B cell (primary cell): ENCODE measurements at regions of chr6 and their contacts with region 1.

Region 1: GRCh38 chr6:26312501-26313390 is 52.3 kb upstream of the BTN3A2 start:
- DNase-seq: peak; percentile 90
- ATAC-seq: peak; percentile 75
- H3K4me3 ChIP-seq: peak overlapping the region; percentile 64 to 100 (median 77)
- H3K4me3 Mint-ChIP-seq: peak overlapping the region; percentile 93
- H3K27ac ChIP-seq: peak overlapping the region in 1 of 2 donors; percentile 56
- H3K27ac Mint-ChIP-seq: peak overlapping the region; percentile 92
- H3K4me1 ChIP-seq: peaks cover 15 to 23% of the 10 kb centered on the region in 2 donors
- H3K4me1 Mint-ChIP-seq: peaks cover 32% of the 10 kb centered on the region
- H3K27me3 ChIP-seq: no peaks in the 10 kb centered on the region
- H3K27me3 Mint-ChIP-seq: peaks cover 4% of the 10 kb centered on the region
- CTCF ChIP-seq: no peak

Region 2: DNA sequence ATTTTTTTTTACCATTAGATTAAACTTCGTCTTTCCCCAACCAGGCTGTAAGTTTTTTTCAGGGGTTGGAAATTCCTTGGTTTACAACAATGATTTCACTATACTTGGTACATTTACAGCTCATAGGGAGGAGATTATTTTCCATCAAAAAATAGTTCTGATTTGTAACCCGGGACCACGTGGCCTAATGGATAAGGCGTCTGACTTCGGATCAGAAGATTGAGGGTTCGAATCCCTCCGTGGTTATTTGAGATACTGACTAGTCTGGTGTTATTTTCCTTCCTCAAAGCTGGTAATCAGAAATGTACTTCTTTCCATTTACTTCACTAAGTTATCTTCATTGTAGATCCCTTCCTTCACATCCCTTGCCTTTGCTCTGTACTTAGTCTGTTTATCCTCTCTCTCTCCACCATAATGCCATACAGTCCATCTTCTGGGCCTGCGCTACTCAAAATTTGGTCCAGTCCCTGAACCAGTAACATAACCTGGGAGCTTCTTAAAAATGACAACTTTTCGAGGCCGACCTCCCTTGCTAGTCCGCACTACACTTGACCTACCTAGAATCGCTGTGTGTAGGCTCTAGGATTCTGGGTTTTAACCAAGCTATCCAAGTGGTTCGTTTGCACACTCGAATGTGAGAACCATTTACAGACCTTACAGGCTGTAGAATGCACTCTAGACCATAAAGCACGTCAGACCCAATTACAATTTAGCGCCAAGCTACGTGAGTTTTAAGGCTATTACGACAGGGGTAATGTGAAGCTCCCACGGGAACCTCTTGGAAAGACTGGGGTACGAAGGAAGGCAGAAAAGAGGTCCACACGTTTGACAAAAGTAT is 10.1 kb after region 1 on chr6:
- CTCF ChIA-PET with region 1: interaction called, 7 read pairs
- POLR2A ChIA-PET with region 1: interaction called, 4 read pairs
- intact Hi-C with region 1: loop called (anchors 1 kb)
- DNase-seq: peak; percentile 83
- ATAC-seq: peak; percentile 59
- H3K4me3 ChIP-seq: peak overlapping the region in 4 of 5 experiments; percentile 49 to 74 (median 59)
- H3K4me3 Mint-ChIP-seq: peak overlapping the region; percentile 74
- H3K27ac ChIP-seq: no peak overlapping the region
- H3K27ac Mint-ChIP-seq: peak overlapping the region; percentile 70
- H3K4me1 ChIP-seq: peaks cover 14 to 31% of the 10 kb centered on the region in 2 donors
- H3K4me1 Mint-ChIP-seq: peaks cover 22% of the 10 kb centered on the region
- H3K27me3 ChIP-seq: peaks cover 0 to 43% (median 25%) of the 10 kb centered on the region in 4 experiments
- H3K27me3 Mint-ChIP-seq: peaks cover 26% of the 10 kb centered on the region
- CTCF ChIP-seq: no peak

Region 3: GRCh38 chr6:26329763-26330511 is 17.2 kb after region 1 on chr6:
- CTCF ChIA-PET with region 1: interaction called, 6 read pairs
- POLR2A ChIA-PET with region 1: interaction called, 4 read pairs
- intact Hi-C with region 1: loop called (anchors 2 kb)
- DNase-seq: peak; percentile 63
- ATAC-seq: no peak
- H3K4me3 ChIP-seq: no peak overlapping the region
- H3K4me3 Mint-ChIP-seq: peak overlapping the region; percentile 64
- H3K27ac ChIP-seq: no peak overlapping the region
- H3K27ac Mint-ChIP-seq: peak overlapping the region; percentile 73
- H3K4me1 ChIP-seq: peaks cover 23 to 27% of the 10 kb centered on the region in 2 donors
- H3K4me1 Mint-ChIP-seq: peaks cover 26% of the 10 kb centered on the region
- H3K27me3 ChIP-seq: peaks cover 0 to 63% (median 62%) of the 10 kb centered on the region in 4 experiments
- H3K27me3 Mint-ChIP-seq: peaks cover 61% of the 10 kb centered on the region
- CTCF ChIP-seq: no peak